Activated T-helper 2 cell treated with anti-CD3 and anti-CD28 coated beads, Interferon-gamma antibody, Interleukin-2, Interleukin-4, amounts not matched to agents 10 μg/mL and 5 μg/mL and 100 μg/mL, durations not matched to agents 14 hours and 24 hours and 36 hours (primary cell): ENCODE measurements at regions of chr4 and their contacts with region 1.

Region 1: DNA sequence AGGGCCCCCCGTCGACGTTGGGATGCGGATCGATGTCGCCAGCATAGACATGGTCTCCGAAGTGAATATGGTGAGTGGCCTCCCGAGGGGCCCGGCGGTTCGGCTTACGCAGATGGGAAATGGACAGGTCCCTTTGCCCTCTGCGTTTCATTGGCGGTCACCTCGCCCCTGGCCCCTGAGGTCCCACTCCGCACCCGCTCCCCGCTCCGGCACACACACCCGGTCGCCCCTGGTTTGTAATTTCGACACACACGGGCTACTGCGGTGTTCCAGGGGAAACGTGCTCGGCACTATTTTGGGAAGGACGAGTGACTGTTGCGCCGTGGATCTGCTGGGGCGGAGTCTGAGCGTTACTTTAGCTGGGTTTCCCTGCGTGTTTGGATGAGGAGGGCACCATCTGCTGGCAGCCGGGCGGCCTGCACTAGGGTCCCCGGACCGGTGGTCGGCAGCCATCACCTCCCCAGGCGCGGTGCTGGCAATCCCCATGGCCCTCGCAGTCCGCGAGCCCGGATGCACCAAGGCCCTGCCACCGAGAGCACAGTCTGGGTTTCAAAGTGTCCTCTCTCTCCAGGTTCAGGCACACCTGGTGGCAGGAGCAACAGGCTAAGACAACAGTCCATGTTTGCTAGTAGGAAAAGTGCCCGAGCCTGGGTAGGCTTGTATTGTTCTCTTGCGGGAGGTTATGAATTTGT is 1.2 kb downstream of the GABRB1 start:
- DNase-seq: peak; percentile 25
- H3K4me3 Mint-ChIP-seq: peak overlapping the region; percentile 63
- H3K27ac Mint-ChIP-seq: no peak overlapping the region
- H3K4me1 Mint-ChIP-seq: peaks cover 18% of the 10 kb centered on the region
- H3K27me3 Mint-ChIP-seq: peaks cover 30% of the 10 kb centered on the region

Region 2: DNA sequence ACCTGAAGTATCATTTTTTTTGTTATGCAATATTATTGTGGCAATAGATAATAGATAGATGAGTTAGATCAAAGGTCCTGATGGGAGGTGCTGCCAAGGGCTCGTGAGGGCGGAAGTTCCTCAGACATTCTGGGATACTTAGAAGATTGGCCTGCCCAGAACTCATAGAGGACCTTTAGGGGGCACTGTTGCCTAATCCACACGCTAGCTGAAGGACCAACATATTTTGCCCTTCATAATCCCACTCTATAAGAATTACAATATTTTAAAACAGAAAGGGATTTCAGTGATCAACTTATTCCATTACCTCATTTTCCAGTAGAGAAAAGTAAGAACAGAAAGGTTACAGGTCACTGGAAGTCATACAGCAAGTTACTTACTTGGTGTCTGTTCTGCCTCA is 100.6 kb before region 1 on chr4:
- intact Hi-C with region 1: loop called (anchors 2 kb)
- DNase-seq: no peak
- H3K4me3 Mint-ChIP-seq: no peak overlapping the region
- H3K27ac Mint-ChIP-seq: no peak overlapping the region
- H3K4me1 Mint-ChIP-seq: no peaks in the 10 kb centered on the region
- H3K27me3 Mint-ChIP-seq: no peaks in the 10 kb centered on the region

Region 3: DNA sequence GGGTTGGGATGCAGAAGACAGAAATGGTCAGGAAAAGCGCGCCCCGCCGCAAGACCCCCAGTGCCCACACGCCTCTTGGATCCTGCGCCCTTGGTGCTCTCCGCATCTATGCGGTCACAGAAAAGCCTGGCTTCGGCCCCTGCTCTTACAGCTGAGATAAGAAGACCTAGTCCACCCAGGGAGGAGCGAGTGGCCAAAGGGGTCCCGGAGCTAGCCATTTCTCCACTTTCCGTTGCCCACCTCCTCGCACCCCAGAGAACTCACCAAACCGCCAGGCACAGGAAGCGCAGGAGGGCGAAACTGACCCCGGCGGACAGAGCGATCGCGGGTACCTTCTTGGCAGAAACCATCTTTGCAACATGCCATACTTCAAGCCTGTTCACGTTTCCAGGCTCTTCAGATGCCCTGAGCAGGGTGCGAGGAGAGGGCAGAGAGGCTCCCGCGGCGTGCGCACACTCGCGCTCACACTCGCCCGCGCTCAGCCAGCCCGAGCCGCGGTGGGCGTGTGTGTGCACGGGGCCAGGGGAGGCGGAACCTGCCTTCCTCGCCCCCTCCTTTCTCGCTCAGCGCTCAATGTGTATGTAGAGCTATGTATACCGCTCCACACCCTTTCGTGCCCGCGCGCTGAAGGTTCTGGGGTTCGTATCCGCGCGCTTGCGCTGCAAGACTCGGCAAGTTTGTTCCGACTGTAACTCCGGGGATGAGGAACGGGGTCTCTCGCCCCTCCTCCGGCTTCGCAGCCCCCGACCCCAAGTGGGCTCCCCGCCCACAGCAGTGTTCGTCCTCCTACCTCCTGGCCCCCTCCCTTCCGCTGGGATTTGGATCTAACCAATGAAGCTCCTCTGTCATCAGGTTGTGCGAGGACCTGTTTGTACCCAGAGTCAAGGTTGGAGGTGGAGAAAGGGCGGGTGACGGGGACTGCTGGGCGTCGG is 39.2 kb before region 1 on chr4 and contains the start of gene GABRA4:
- intact Hi-C with region 1: loop called (anchors 5 kb)
- DNase-seq: no peak
- H3K4me3 Mint-ChIP-seq: peak within 1 kb of the TSS; percentile 31
- H3K27ac Mint-ChIP-seq: no peak within 1 kb of the TSS
- H3K4me1 Mint-ChIP-seq: peaks cover 5% of the 10 kb centered on the region
- H3K27me3 Mint-ChIP-seq: peaks cover 41% of the 10 kb centered on the region
- total RNA-seq, gene GABRA4: not detected in 2 replicates